Posterior vena cava (tissue), 2 donors: ENCODE measurements at regions of chr13 and their contacts with region 1.

Region 1: GRCh38 chr13:50529154-50529882 is 314.2 kb downstream of the DLEU7 start:
- DNase-seq: peak; percentile 94

Region 2: GRCh38 chr13:50094615-50095293 is 434.6 kb before region 1 on chr13:
- intact Hi-C with region 1: loop called in 1 of 2 experiments (anchors 10 kb)
- DNase-seq: no peak

Region 3: DNA sequence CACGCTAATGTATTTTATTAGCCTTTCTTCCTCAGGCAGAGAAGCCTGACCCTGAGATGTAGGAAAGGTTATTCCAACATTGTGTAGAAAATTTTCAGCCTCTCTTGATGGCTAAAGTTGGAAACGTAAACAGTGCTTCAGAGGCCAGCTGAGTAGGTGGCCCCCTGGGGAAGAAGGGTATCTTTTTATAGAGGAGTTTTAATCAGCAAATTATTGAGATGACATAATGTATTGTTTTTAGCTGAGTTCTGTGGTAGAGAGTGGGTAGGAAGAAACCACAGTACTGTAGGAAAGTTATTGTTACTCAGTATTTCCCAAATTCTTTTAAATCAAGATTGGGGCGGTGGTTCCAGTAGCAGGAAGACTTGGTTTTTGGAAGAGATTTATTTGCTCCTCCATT is 45.4 kb after region 1 on chr13:
- intact Hi-C with region 1: no loop called
- DNase-seq: no peak